ENCODE measurements at regions of chr21 and their contacts with region 1.

Region 1: GRCh38 chr21:42878993-42879787 is at the start of gene WDR4:
- DNase-seq: peak; percentile 93 to 98 (median 96)
- H3K4me3 ChIP-seq: peak within 1 kb of the TSS; percentile 87 to 89 (median 89)
- H3K4me3 Mint-ChIP-seq: peak within 1 kb of the TSS; percentile 86 to 98
- H3K27ac ChIP-seq: peak within 1 kb of the TSS; percentile 84 to 86
- H3K27ac Mint-ChIP-seq: peak within 1 kb of the TSS; percentile 94 to 97 (median 95)
- H3K4me1 ChIP-seq: peaks cover 17 to 20% of the 10 kb centered on the region in 2 donors
- H3K4me1 Mint-ChIP-seq: peaks cover 20% of the 10 kb centered on the region
- H3K27me3 ChIP-seq: no peaks in the 10 kb centered on the region
- H3K27me3 Mint-ChIP-seq: peaks cover 0 to 2% (median 1%) of the 10 kb centered on the region in 3 donors
- CTCF ChIP-seq: no peak
- polyA plus RNA-seq, gene WDR4: 2.9 to 7.0 (median 3.6) TPM

Region 2: DNA sequence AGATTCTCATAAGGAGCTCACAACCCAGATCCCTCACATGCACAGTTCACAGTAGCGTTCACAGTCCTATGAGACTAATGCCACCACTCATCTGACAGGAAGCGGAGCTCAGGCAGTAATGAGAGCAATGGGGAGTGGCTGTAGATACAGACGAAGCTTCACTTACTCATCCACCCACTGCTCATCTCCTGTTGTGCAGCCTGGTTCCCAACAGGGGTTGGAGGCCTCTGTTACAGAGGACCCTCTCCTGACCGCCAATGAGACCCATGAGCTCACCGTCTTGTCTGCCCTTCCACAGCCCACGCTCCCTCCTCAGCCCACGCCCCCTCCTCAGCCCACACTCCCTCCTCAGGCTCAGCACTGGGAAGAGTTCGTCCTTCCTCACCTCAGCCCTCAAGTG is 422.7 kb before region 1 on chr21:
- intact Hi-C with region 1: no loop called
- DNase-seq: no peak
- H3K4me3 ChIP-seq: no peak overlapping the region
- H3K4me3 Mint-ChIP-seq: no peak overlapping the region
- H3K27ac ChIP-seq: no peak overlapping the region
- H3K27ac Mint-ChIP-seq: no peak overlapping the region
- H3K4me1 ChIP-seq: no peaks in the 10 kb centered on the region
- H3K4me1 Mint-ChIP-seq: peaks cover 7% of the 10 kb centered on the region
- H3K27me3 ChIP-seq: no peaks in the 10 kb centered on the region
- H3K27me3 Mint-ChIP-seq: peaks cover 0 to 6% (median 5%) of the 10 kb centered on the region in 3 donors
- CTCF ChIP-seq: no peak

Region 3: GRCh38 chr21:42513985-42514882 is 365.0 kb before region 1 on chr21:
- intact Hi-C with region 1: no loop called
- DNase-seq: peak; percentile 30 to 54 (median 46)
- H3K4me3 ChIP-seq: peak overlapping the region; percentile 74 to 90 (median 78)
- H3K4me3 Mint-ChIP-seq: peak overlapping the region; percentile 92 to 97
- H3K27ac ChIP-seq: peak overlapping the region in 1 of 2 donors; percentile 79
- H3K27ac Mint-ChIP-seq: peak overlapping the region; percentile 56 to 88 (median 76)
- H3K4me1 ChIP-seq: peaks cover 15 to 25% of the 10 kb centered on the region in 2 donors
- H3K4me1 Mint-ChIP-seq: peaks cover 21% of the 10 kb centered on the region
- H3K27me3 ChIP-seq: no peaks in the 10 kb centered on the region
- H3K27me3 Mint-ChIP-seq: no peaks in the 10 kb centered on the region
- CTCF ChIP-seq: no peak

Region 4: DNA sequence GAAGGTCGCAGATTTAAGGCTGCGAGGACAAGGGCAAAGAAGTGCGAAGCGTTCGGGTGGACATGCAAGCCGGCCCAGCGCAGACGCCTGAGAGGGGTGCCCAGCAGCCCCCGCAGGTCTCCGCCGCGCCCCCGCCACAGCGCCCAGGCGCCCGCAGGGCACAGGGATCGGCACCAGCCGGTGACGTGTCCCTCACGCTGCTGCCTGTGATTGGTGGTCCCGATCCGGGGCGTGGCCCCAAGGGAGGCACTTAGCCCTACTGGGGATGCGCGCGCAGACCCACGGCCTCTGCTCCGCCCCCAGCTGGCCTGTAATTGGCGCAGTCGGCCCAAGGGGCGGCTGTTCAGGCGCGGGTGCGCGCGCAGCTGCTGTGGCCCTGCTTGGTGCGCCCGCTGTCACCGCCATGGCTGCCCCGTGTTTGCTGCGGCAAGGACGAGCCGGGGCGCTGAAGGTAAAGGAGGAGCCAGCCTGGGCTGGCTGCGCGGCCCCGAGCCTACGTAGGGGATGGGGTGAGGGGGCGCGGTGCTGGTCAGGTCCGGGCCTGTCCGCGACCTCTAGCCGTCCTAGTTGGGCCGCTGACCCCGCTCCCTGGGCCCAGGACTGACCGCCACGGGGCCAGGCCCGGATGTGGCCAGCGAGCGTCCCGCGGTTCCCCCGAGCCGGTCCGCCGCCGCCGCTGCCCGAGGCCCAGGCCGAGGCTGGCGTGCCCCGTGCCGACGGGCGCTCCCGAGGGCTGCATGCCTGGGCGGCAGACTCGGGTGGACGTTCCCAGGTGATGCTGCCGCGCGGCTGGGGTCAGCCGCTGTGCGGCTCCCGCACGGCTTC is 14.0 kb after region 1 on chr21 and contains the start of gene NDUFV3:
- intact Hi-C with region 1: loop called (anchors 1 kb)
- DNase-seq: peak; percentile 99 to 100 (median 99)
- H3K4me3 ChIP-seq: peak within 1 kb of the TSS; percentile 78 to 85 (median 85)
- H3K4me3 Mint-ChIP-seq: peak within 1 kb of the TSS; percentile 82 to 93
- H3K27ac ChIP-seq: peak within 1 kb of the TSS; percentile 91 to 95
- H3K27ac Mint-ChIP-seq: peak within 1 kb of the TSS; percentile 94 to 98 (median 96)
- H3K4me1 ChIP-seq: peaks cover 7 to 13% of the 10 kb centered on the region in 2 donors
- H3K4me1 Mint-ChIP-seq: peaks cover 13% of the 10 kb centered on the region
- H3K27me3 ChIP-seq: no peaks in the 10 kb centered on the region
- H3K27me3 Mint-ChIP-seq: peaks cover 0 to 3% (median 0%) of the 10 kb centered on the region in 3 donors
- CTCF ChIP-seq: no peak
- polyA plus RNA-seq, gene NDUFV3: 18.2 to 35.5 (median 28.0) TPM

Region 5: DNA sequence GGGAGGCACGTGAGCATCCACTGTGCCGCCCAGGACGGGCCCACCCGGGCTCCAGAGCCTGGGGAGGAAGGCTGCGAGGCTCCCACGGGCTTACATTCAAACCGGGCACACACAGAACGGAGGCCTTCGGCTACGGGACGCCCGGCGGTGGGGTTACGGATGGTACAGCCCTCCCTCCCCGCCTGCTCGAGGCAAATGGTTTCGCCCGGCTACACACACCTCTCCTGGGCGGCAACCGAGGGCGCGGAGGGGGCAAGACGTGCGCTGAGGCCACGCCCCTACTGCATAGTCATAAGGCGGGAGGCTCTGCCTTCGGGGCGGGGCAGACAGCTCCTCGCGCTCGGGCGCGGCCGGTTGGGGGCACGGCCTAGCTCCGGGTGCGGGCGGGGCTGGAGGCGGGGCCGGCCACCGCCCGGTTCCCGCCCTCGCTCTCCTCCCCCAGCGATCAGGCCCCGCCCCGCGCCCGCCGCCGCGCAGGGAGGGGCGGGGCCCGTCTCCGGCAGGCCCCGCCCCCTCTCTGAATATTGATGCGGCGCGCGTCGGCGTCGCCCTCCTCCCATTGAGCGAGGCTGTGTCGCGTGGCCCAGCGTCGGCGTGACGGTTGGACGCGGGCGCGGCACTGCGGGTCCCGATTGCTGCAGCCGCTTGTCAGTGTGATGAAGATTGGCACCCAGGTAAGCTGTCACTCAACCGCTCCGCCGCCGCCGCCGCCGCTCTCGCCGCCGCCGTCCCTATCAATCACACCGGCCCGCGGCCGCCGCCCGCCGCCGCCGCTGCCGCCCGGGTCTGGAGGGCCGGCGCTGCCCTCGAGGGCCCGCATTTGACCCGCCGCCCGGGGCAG is 95.0 kb after region 1 on chr21 and contains the start of gene PKNOX1:
- intact Hi-C with region 1: loop called (anchors 5 kb)
- DNase-seq: peak; percentile 98 to 99 (median 99)
- H3K4me3 ChIP-seq: peak within 1 kb of the TSS; percentile 84 to 91 (median 89)
- H3K4me3 Mint-ChIP-seq: peak within 1 kb of the TSS; percentile 93 to 94
- H3K27ac ChIP-seq: peak within 1 kb of the TSS; percentile 74 to 90
- H3K27ac Mint-ChIP-seq: peak within 1 kb of the TSS; percentile 84 to 96 (median 92)
- H3K4me1 ChIP-seq: peaks cover 13 to 21% of the 10 kb centered on the region in 2 donors
- H3K4me1 Mint-ChIP-seq: peaks cover 19% of the 10 kb centered on the region
- H3K27me3 ChIP-seq: no peaks in the 10 kb centered on the region
- H3K27me3 Mint-ChIP-seq: peaks cover 0 to 2% (median 1%) of the 10 kb centered on the region in 3 donors
- CTCF ChIP-seq: no peak
- polyA plus RNA-seq, gene PKNOX1: 9.2 to 11.8 (median 9.9) TPM

Measured in CD14-positive monocyte (primary cell).